Activated CD8-positive, alpha-beta T cell treated with anti-CD3 and anti-CD28 coated beads, Interleukin-2, amount 10 ng/mL, durations not matched to agents 7 days and 5 days (primary cell): ENCODE measurements at regions of chr19 and their contacts with region 1.

Region 1: GRCh38 chr19:48271531-48272151 is 1.8 kb downstream of the ZNF114 start:
- DNase-seq: peak; percentile 31
- ATAC-seq: peak; percentile 59
- H3K4me3 Mint-ChIP-seq: peak overlapping the region; percentile 77
- H3K27ac Mint-ChIP-seq: peak overlapping the region; percentile 66
- H3K4me1 Mint-ChIP-seq: peaks cover 26% of the 10 kb centered on the region
- H3K27me3 Mint-ChIP-seq: peaks cover 9% of the 10 kb centered on the region

Region 2: GRCh38 chr19:48186541-48186991 is 85.1 kb before region 1 on chr19:
- CTCF ChIA-PET with region 1: no interaction called
- POLR2A ChIA-PET with region 1: no interaction called
- DNase-seq: no peak
- ATAC-seq: no peak
- H3K4me3 Mint-ChIP-seq: no peak overlapping the region
- H3K27ac Mint-ChIP-seq: no peak overlapping the region
- H3K4me1 Mint-ChIP-seq: peaks cover 7% of the 10 kb centered on the region
- H3K27me3 Mint-ChIP-seq: no peaks in the 10 kb centered on the region

Region 3: DNA sequence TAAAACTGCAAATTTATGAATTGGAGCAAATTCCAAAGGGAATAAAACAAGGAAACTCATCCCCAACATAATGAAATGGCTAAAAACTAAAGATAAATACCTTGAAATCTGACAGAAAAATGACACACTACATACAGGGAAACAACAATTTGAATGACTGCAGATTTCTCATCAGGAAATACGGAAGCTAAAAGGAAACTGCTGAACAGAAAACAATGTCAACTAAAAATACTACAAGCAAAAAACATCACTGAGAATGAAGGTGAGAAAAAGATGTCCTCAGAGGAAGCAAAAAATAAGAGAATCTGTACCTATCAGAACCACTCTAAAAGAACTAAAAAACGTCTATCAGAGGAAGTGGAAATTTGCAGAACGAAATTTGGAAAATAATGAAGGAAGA is 61.6 kb before region 1 on chr19:
- CTCF ChIA-PET with region 1: interaction called, 10 read pairs
- POLR2A ChIA-PET with region 1: no interaction called
- DNase-seq: no peak
- ATAC-seq: no peak
- H3K4me3 Mint-ChIP-seq: no peak overlapping the region
- H3K27ac Mint-ChIP-seq: peak overlapping the region; percentile 53
- H3K4me1 Mint-ChIP-seq: peaks cover 18% of the 10 kb centered on the region
- H3K27me3 Mint-ChIP-seq: no peaks in the 10 kb centered on the region

Region 4: GRCh38 chr19:48290771-48291488 is 19.3 kb after region 1 on chr19:
- CTCF ChIA-PET with region 1: interaction called, 40 read pairs
- POLR2A ChIA-PET with region 1: no interaction called
- DNase-seq: peak; percentile 66
- ATAC-seq: peak; percentile 80
- H3K4me3 Mint-ChIP-seq: peak overlapping the region; percentile 70
- H3K27ac Mint-ChIP-seq: no peak overlapping the region
- H3K4me1 Mint-ChIP-seq: peaks cover 8% of the 10 kb centered on the region
- H3K27me3 Mint-ChIP-seq: peaks cover 5% of the 10 kb centered on the region